CD4-positive, alpha-beta memory T cell (primary cell): ENCODE measurements at regions of chr3 and their contacts with region 1.

Region 1: GRCh38 chr3:150703299-150704134 is at the start of gene ERICH6:
- DNase-seq: peak; percentile 75 to 84 (median 82)
- H3K4me3 ChIP-seq: peak within 1 kb of the TSS; percentile 78 to 88
- H3K4me3 Mint-ChIP-seq: peak within 1 kb of the TSS; percentile 92 to 99 (median 96)
- H3K27ac ChIP-seq: peak within 1 kb of the TSS; percentile 82
- H3K27ac Mint-ChIP-seq: peak within 1 kb of the TSS; percentile 94 to 99 (median 98)
- H3K4me1 ChIP-seq: peaks cover 14% of the 10 kb centered on the region
- H3K4me1 Mint-ChIP-seq: peaks cover 11 to 30% (median 19%) of the 10 kb centered on the region in 4 donors
- H3K27me3 ChIP-seq: no peaks in the 10 kb centered on the region
- H3K27me3 Mint-ChIP-seq: no peaks in the 10 kb centered on the region
- total RNA-seq, gene ERICH6: not detected

Region 2: GRCh38 chr3:150546226-150547044 is 157.1 kb before region 1 on chr3 and contains the starts of genes EIF2A and SERP1:
- CTCF ChIA-PET with region 1: no interaction called
- POLR2A ChIA-PET with region 1: interaction called, 23 read pairs
- intact Hi-C with region 1: loop called (anchors 1 kb)
- DNase-seq: peak; percentile 99 to 100 (median 100)
- H3K4me3 ChIP-seq: peak within 1 kb of the TSS; percentile 77 to 89
- H3K4me3 Mint-ChIP-seq: peak within 1 kb of the TSS; percentile 92 to 99 (median 97)
- H3K27ac ChIP-seq: peak within 1 kb of the TSS; percentile 99
- H3K27ac Mint-ChIP-seq: peak within 1 kb of the TSS; percentile 95 to 100 (median 99)
- H3K4me1 ChIP-seq: peaks cover 62% of the 10 kb centered on the region
- H3K4me1 Mint-ChIP-seq: peaks cover 39 to 81% (median 61%) of the 10 kb centered on the region in 4 donors
- H3K27me3 ChIP-seq: no peaks in the 10 kb centered on the region
- H3K27me3 Mint-ChIP-seq: no peaks in the 10 kb centered on the region
- total RNA-seq, gene EIF2A: 90.8 to 95.3 TPM
- total RNA-seq, gene SERP1: 122 to 128 TPM

Region 3: GRCh38 chr3:150635526-150635925 is 68.0 kb before region 1 on chr3:
- CTCF ChIA-PET with region 1: interaction called, 4 read pairs
- POLR2A ChIA-PET with region 1: interaction called, 17 read pairs
- intact Hi-C with region 1: loop called (anchors 10 kb)
- DNase-seq: peak in 4 of 5 donors; percentile 39 to 51 (median 45)
- H3K4me3 ChIP-seq: no peak overlapping the region
- H3K4me3 Mint-ChIP-seq: peak overlapping the region; percentile 26 to 79 (median 62)
- H3K27ac ChIP-seq: no peak overlapping the region
- H3K27ac Mint-ChIP-seq: peak overlapping the region; percentile 42 to 85 (median 77)
- H3K4me1 ChIP-seq: peaks cover 17% of the 10 kb centered on the region
- H3K4me1 Mint-ChIP-seq: peaks cover 21 to 41% (median 28%) of the 10 kb centered on the region in 4 donors
- H3K27me3 ChIP-seq: no peaks in the 10 kb centered on the region
- H3K27me3 Mint-ChIP-seq: no peaks in the 10 kb centered on the region